ENCODE measurements at regions of chr16 and their contacts with region 1.

Region 1: DNA sequence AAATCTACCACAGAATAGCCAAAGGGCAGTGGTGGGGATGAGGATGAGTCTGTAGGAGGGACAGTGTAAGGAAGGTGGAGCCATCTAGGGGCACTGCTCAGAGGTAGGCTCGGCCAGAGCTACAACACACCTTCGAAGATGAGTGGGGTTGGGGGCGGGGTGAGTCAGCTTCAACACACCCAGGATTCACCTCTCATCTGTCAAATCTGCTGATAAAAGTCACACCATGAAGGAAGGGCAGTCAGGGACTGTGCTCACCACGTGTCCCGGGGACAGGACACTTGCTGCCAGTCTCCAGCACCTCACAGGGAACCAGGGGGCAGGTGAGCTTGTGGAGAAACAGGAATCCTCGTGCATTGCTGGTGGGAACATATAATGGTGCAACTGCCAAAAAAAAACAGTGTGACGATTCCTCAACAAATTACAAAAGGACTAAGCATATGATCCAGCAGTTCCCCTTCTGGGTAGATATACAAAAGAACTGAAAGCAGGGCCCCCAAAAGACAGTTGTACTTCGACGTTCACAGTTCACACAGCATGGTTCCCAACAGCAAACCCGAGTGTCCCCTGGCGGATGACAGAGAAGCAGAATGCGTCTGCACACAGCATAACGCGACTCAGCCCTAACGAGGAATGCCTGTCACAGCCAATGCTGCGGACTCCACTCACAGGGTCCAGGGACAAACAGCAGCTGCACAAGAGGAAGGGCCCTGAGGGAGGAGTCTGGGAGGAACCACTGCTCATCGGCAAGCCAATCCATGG is 133.1 kb downstream of the ANKRD11 start:
- DNase-seq: peak in 1 of 2 donors; percentile 47
- ATAC-seq: peak in 2 of 3 donors; percentile 13 to 22
- H3K4me3 ChIP-seq: no peak overlapping the region
- H3K4me3 Mint-ChIP-seq: peak overlapping the region; percentile 87
- H3K27ac ChIP-seq: peak overlapping the region; percentile 10
- H3K27ac Mint-ChIP-seq: peak overlapping the region; percentile 82 to 83
- H3K4me1 ChIP-seq: peaks cover 98% of the 10 kb centered on the region
- H3K4me1 Mint-ChIP-seq: peaks cover 77 to 92% of the 10 kb centered on the region in 2 donors
- H3K27me3 ChIP-seq: no peaks in the 10 kb centered on the region
- H3K27me3 Mint-ChIP-seq: no peaks in the 10 kb centered on the region
- CTCF ChIP-seq: no peak

Region 2: DNA sequence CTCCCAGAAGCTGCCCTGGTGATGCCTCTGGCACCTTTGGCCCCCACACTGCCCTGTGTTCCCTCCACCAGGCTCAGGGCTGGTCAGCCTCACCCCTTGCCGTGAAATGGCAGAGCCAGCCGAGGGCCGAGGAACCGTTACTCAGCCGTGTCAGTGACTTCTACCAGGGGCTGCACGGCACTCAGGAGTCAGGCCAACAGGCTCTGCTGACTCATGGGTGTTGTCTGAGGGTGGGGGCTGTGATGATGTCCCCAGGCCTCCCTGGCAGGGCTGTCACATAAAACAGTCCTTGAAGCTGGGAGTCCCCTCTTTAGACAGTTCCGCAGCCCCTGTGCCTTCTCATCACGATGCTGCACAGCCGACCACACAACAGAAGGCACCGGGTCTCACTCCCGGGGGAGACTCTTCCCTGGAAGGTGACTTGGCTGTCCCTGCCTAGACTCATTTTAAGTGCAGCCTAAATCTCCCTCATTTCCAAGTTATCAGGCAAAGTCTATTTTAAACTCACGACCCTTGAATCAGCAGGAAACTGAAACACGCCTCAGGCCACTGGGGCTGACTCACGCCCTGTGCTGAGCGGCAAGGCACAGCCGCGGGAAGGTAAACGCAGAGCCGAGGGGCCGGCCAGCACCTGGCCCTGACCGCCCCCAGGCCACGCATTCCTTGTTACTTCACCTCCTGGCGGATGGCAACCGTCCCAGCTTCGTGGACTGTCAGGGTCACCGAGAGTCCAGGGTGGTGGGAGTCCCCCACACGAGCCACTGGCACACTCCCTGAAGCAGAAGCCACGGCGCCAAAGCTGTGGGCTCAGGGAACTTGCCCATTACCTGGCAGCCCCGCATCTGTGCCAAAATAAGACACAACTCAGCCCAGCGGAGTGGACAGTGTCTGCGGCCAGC is 37.1 kb before region 1 on chr16:
- intact Hi-C with region 1: loop called (anchors 5 kb)
- DNase-seq: peak in 1 of 2 donors; percentile 49
- ATAC-seq: peak in 2 of 3 donors; percentile 24 to 36
- H3K4me3 ChIP-seq: no peak overlapping the region
- H3K4me3 Mint-ChIP-seq: peak overlapping the region; percentile 80
- H3K27ac ChIP-seq: no peak overlapping the region
- H3K27ac Mint-ChIP-seq: peak overlapping the region; percentile 70 to 98
- H3K4me1 ChIP-seq: peaks cover 97% of the 10 kb centered on the region
- H3K4me1 Mint-ChIP-seq: peaks cover 79 to 85% of the 10 kb centered on the region in 2 donors
- H3K27me3 ChIP-seq: no peaks in the 10 kb centered on the region
- H3K27me3 Mint-ChIP-seq: no peaks in the 10 kb centered on the region
- CTCF ChIP-seq: no peak

Region 3: GRCh38 chr16:89383082-89384003 is 26.1 kb after region 1 on chr16:
- intact Hi-C with region 1: no loop called
- DNase-seq: peak; percentile 28 to 44
- ATAC-seq: peak; percentile 79 to 87 (median 83)
- H3K4me3 ChIP-seq: no peak overlapping the region
- H3K4me3 Mint-ChIP-seq: peak overlapping the region; percentile 61
- H3K27ac ChIP-seq: no peak overlapping the region
- H3K27ac Mint-ChIP-seq: peak overlapping the region; percentile 43 to 78
- H3K4me1 ChIP-seq: peaks cover 76% of the 10 kb centered on the region
- H3K4me1 Mint-ChIP-seq: peaks cover 75 to 83% of the 10 kb centered on the region in 2 donors
- H3K27me3 ChIP-seq: no peaks in the 10 kb centered on the region
- H3K27me3 Mint-ChIP-seq: no peaks in the 10 kb centered on the region
- CTCF ChIP-seq: no peak

Region 4: GRCh38 chr16:89397331-89397861 is 40.2 kb after region 1 on chr16:
- intact Hi-C with region 1: no loop called
- DNase-seq: no peak
- ATAC-seq: peak in 1 of 3 donors; percentile 14
- H3K4me3 ChIP-seq: no peak overlapping the region
- H3K4me3 Mint-ChIP-seq: no peak overlapping the region
- H3K27ac ChIP-seq: no peak overlapping the region
- H3K27ac Mint-ChIP-seq: peak overlapping the region in 1 of 2 donors; percentile 33
- H3K4me1 ChIP-seq: peaks cover 55% of the 10 kb centered on the region
- H3K4me1 Mint-ChIP-seq: peaks cover 52 to 63% of the 10 kb centered on the region in 2 donors
- H3K27me3 ChIP-seq: no peaks in the 10 kb centered on the region
- H3K27me3 Mint-ChIP-seq: no peaks in the 10 kb centered on the region
- CTCF ChIP-seq: no peak

Region 5: GRCh38 chr16:89409161-89409711 is 52.0 kb after region 1 on chr16:
- intact Hi-C with region 1: loop called (anchors 2 kb)
- DNase-seq: peak; percentile 63 to 89
- ATAC-seq: peak; percentile 72 to 82 (median 81)
- H3K4me3 ChIP-seq: no peak overlapping the region
- H3K4me3 Mint-ChIP-seq: peak overlapping the region; percentile 75
- H3K27ac ChIP-seq: peak overlapping the region; percentile 81
- H3K27ac Mint-ChIP-seq: peak overlapping the region; percentile 73 to 82
- H3K4me1 ChIP-seq: peaks cover 94% of the 10 kb centered on the region
- H3K4me1 Mint-ChIP-seq: peaks cover 80 to 85% of the 10 kb centered on the region in 2 donors
- H3K27me3 ChIP-seq: no peaks in the 10 kb centered on the region
- H3K27me3 Mint-ChIP-seq: no peaks in the 10 kb centered on the region
- CTCF ChIP-seq: no peak

Region 6: GRCh38 chr16:89422905-89423630 is 65.8 kb after region 1 on chr16:
- intact Hi-C with region 1: loop called (anchors 2 kb)
- DNase-seq: peak; percentile 69 to 75
- ATAC-seq: peak; percentile 86 to 95 (median 91)
- H3K4me3 ChIP-seq: no peak overlapping the region
- H3K4me3 Mint-ChIP-seq: peak overlapping the region; percentile 70
- H3K27ac ChIP-seq: peak overlapping the region; percentile 22
- H3K27ac Mint-ChIP-seq: peak overlapping the region; percentile 76 to 86
- H3K4me1 ChIP-seq: peaks cover 81% of the 10 kb centered on the region
- H3K4me1 Mint-ChIP-seq: peaks cover 74 to 84% of the 10 kb centered on the region in 2 donors
- H3K27me3 ChIP-seq: no peaks in the 10 kb centered on the region
- H3K27me3 Mint-ChIP-seq: no peaks in the 10 kb centered on the region
- CTCF ChIP-seq: no peak

Region 7: GRCh38 chr16:89484923-89485679 is 127.9 kb after region 1 on chr16:
- intact Hi-C with region 1: loop called (anchors 1 kb)
- DNase-seq: peak in 1 of 2 donors; percentile 64
- ATAC-seq: peak in 2 of 3 donors; percentile 10 to 12
- H3K4me3 ChIP-seq: no peak overlapping the region
- H3K4me3 Mint-ChIP-seq: peak overlapping the region; percentile 90
- H3K27ac ChIP-seq: peak overlapping the region; percentile 19
- H3K27ac Mint-ChIP-seq: peak overlapping the region; percentile 84 to 90
- H3K4me1 ChIP-seq: peaks cover 74% of the 10 kb centered on the region
- H3K4me1 Mint-ChIP-seq: peaks cover 81 to 87% of the 10 kb centered on the region in 2 donors
- H3K27me3 ChIP-seq: no peaks in the 10 kb centered on the region
- H3K27me3 Mint-ChIP-seq: no peaks in the 10 kb centered on the region
- CTCF ChIP-seq: no peak

Region 8: GRCh38 chr16:89507834-89508590 is 150.8 kb after region 1 on chr16 and contains the start of gene SPG7:
- intact Hi-C with region 1: loop called (anchors 2 kb)
- DNase-seq: peak; percentile 95 to 96
- ATAC-seq: peak; percentile 63 to 84 (median 75)
- H3K4me3 ChIP-seq: peak within 1 kb of the TSS; percentile 61
- H3K4me3 Mint-ChIP-seq: peak within 1 kb of the TSS; percentile 86
- H3K27ac ChIP-seq: peak within 1 kb of the TSS; percentile 91
- H3K27ac Mint-ChIP-seq: peak within 1 kb of the TSS; percentile 78 to 87
- H3K4me1 ChIP-seq: peaks cover 44% of the 10 kb centered on the region
- H3K4me1 Mint-ChIP-seq: peaks cover 26 to 28% of the 10 kb centered on the region in 2 donors
- H3K27me3 ChIP-seq: no peaks in the 10 kb centered on the region
- H3K27me3 Mint-ChIP-seq: no peaks in the 10 kb centered on the region
- CTCF ChIP-seq: no peak
- total RNA-seq, gene SPG7: 142 to 195 (median 180) TPM